ENCODE measurements at regions of chr9 and their contacts with region 1.

Region 1: GRCh38 chr9:129177791-129178559 is at the start of gene IER5L:
- DNase-seq: peak; percentile 99
- H3K4me3 ChIP-seq: peak within 1 kb of the TSS; percentile 90 to 98
- H3K27ac ChIP-seq: peak within 1 kb of the TSS; percentile 96 to 97
- H3K4me1 ChIP-seq: peaks cover 14 to 19% of the 10 kb centered on the region in 2 experiments; a peak in 3 of 4 replicates
- H3K27me3 ChIP-seq: no peaks in the 10 kb centered on the region
- CTCF ChIP-seq: peak; percentile 18; the same call in 1 of the 2 replicates
- EP300 ChIP-seq: no peak; a peak in 1 of 4 replicates
- RAD21 ChIP-seq: no peak; the same call in 1 of the 2 replicates
- polyA plus RNA-seq, gene IER5L: 8.9 and 16.2 TPM in 2 replicates

Region 2: GRCh38 chr9:129154866-129155477 is 23.0 kb before region 1 on chr9:
- CTCF ChIA-PET with region 1: interaction called, 20 read pairs
- POLR2A ChIA-PET with region 1: no interaction called
- DNase-seq: no peak
- H3K4me3 ChIP-seq: no peak overlapping the region
- H3K27ac ChIP-seq: no peak overlapping the region
- H3K4me1 ChIP-seq: no peaks in the 10 kb centered on the region
- H3K27me3 ChIP-seq: no peaks in the 10 kb centered on the region
- CTCF ChIP-seq: no peak
- EP300 ChIP-seq: no peak
- RAD21 ChIP-seq: no peak

Region 3: GRCh38 chr9:129333953-129334724 is 156.2 kb after region 1 on chr9:
- CTCF ChIA-PET with region 1: interaction called, 12 read pairs
- POLR2A ChIA-PET with region 1: interaction called, 12 read pairs
- DNase-seq: peak; percentile 93
- H3K4me3 ChIP-seq: peak overlapping the region; percentile 3 to 43; a peak in 3 of 4 replicates
- H3K27ac ChIP-seq: peak overlapping the region; percentile 89 to 92
- H3K4me1 ChIP-seq: peaks cover 17 to 23% of the 10 kb centered on the region in 2 experiments; a peak in 3 of 4 replicates
- H3K27me3 ChIP-seq: no peaks in the 10 kb centered on the region
- CTCF ChIP-seq: no peak
- EP300 ChIP-seq: peak; percentile 87 to 92
- RAD21 ChIP-seq: peak; percentile 40

Region 4: GRCh38 chr9:129460323-129461261 is 282.6 kb after region 1 on chr9:
- CTCF ChIA-PET with region 1: interaction called, 28 read pairs
- POLR2A ChIA-PET with region 1: interaction called, 21 read pairs
- DNase-seq: peak; percentile 96
- H3K4me3 ChIP-seq: peak overlapping the region; percentile 33 to 55
- H3K27ac ChIP-seq: peak overlapping the region; percentile 99 to 100
- H3K4me1 ChIP-seq: peaks cover 39 to 44% of the 10 kb centered on the region in 2 experiments; a peak in 3 of 4 replicates
- H3K27me3 ChIP-seq: no peaks in the 10 kb centered on the region
- CTCF ChIP-seq: no peak
- EP300 ChIP-seq: peak; percentile 44 to 46; a peak in 2 of 4 replicates
- RAD21 ChIP-seq: peak; percentile 39

Region 5: GRCh38 chr9:129610473-129611301 is 432.7 kb after region 1 on chr9:
- CTCF ChIA-PET with region 1: interaction called, 183 read pairs
- POLR2A ChIA-PET with region 1: interaction called, 6 read pairs
- DNase-seq: peak; percentile 91
- H3K4me3 ChIP-seq: peak overlapping the region; percentile 60 to 77
- H3K27ac ChIP-seq: peak overlapping the region; percentile 58 to 60; a peak in 3 of 4 replicates
- H3K4me1 ChIP-seq: peaks cover 4 to 25% of the 10 kb centered on the region in 2 experiments; a peak in 2 of 4 replicates
- H3K27me3 ChIP-seq: no peaks in the 10 kb centered on the region
- CTCF ChIP-seq: peak; percentile 87
- EP300 ChIP-seq: no peak
- RAD21 ChIP-seq: peak; percentile 90